GM10248 (cell line): ENCODE measurements at regions of chr16 and their contacts with region 1.

Region 1: GRCh38 chr16:23877107-23878090 is 41.6 kb downstream of the PRKCB start:
- DNase-seq: peak; percentile 17
- CTCF ChIP-seq: peak; percentile 38

Region 2: DNA sequence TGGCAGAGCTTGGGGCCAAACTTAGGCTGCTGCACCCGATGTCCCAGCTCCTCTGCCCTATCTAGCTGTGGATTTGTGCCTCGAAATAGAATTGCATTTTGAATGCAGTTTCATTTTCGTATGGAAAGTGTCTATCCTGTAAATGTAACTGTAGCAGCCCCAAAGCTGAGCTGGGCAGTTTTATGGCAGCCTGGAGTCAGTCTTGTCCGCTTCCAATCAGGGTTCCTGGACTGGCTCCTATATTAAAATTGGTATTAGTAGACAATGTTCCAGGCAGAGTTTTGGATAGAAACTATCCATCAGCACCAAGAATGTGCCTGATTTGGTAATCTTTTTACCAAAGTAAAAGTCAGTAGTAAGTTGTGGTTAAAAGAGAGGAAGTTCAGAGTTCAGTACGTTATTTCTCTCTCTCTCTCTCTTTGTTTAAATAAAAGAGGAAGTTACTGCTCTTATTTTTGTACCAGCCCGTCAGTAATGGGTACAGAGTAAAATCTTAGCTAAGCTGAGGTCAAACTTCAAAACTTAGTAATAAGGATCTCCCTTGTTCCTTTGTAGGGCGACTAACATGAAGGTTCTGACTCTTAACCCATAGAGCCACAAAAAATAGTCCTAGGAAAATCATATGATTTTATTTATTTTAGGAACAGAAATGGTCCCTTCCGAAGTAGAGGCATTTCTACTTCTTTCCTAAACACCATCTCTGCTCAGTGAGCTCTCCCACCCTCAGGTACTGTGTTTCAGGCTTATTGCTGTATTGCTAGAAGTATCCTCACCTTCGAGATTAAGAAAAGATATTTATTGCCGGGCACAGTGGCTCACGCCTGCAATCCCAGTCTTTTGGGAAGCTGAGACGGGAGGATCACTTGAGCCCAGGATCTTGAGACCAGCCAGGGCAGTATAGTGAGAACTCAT is 13.6 kb before region 1 on chr16:
- CTCF ChIA-PET with region 1: interaction called, 17 read pairs
- POLR2A ChIA-PET with region 1: interaction called, 4 read pairs
- DNase-seq: peak; percentile 56
- CTCF ChIP-seq: no peak

Region 3: GRCh38 chr16:23889189-23889588 is 11.8 kb after region 1 on chr16:
- CTCF ChIA-PET with region 1: interaction called, 11 read pairs
- POLR2A ChIA-PET with region 1: no interaction called
- DNase-seq: no peak
- CTCF ChIP-seq: no peak

Region 4: GRCh38 chr16:23905027-23905426 is 27.6 kb after region 1 on chr16:
- CTCF ChIA-PET with region 1: interaction called, 10 read pairs
- POLR2A ChIA-PET with region 1: no interaction called
- DNase-seq: no peak
- CTCF ChIP-seq: no peak